PC-3 (cell line): ENCODE measurements at regions of chr5 and their contacts with region 1.

Region 1: GRCh38 chr5:17118631-17119030 is 98.8 kb upstream of the BASP1 start:
- DNase-seq: peak; percentile 100
- ATAC-seq: peak; percentile 97
- H3K4me3 ChIP-seq: no peak overlapping the region; the same call in 1 of the 2 replicates
- H3K27ac ChIP-seq: peak overlapping the region; percentile 83
- H3K4me1 ChIP-seq: peaks cover 34% of the 10 kb centered on the region
- H3K27me3 ChIP-seq: no peaks in the 10 kb centered on the region
- CTCF ChIP-seq: no peak

Region 2: GRCh38 chr5:16980992-16981391 is 137.6 kb before region 1 on chr5:
- CTCF ChIA-PET with region 1: no interaction called
- POLR2A ChIA-PET with region 1: interaction called, 13 read pairs
- intact Hi-C with region 1: no loop called
- DNase-seq: peak; percentile 46
- ATAC-seq: peak; percentile 78
- H3K4me3 ChIP-seq: no peak overlapping the region
- H3K27ac ChIP-seq: no peak overlapping the region
- H3K4me1 ChIP-seq: no peaks in the 10 kb centered on the region
- H3K27me3 ChIP-seq: no peaks in the 10 kb centered on the region
- CTCF ChIP-seq: no peak

Region 3: GRCh38 chr5:17204133-17204489 is 85.5 kb after region 1 on chr5:
- CTCF ChIA-PET with region 1: no interaction called
- POLR2A ChIA-PET with region 1: no interaction called
- intact Hi-C with region 1: no loop called
- DNase-seq: no peak
- ATAC-seq: no peak
- H3K4me3 ChIP-seq: no peak overlapping the region
- H3K27ac ChIP-seq: no peak overlapping the region
- H3K4me1 ChIP-seq: no peaks in the 10 kb centered on the region
- H3K27me3 ChIP-seq: no peaks in the 10 kb centered on the region
- CTCF ChIP-seq: no peak